Activated T-helper 1 cell treated with anti-CD3 and anti-CD28 coated beads, Interleukin-12 subunit alpha, Interleukin-12 subunit beta, Interleukin-2, Interleukin-4 antibody, amounts not matched to agents 30 ng/mL and 10 ng/mL and 1 ng/mL, durations not matched to agents 14 hours and 24 hours and 36 hours (primary cell): ENCODE measurements at regions of chr12 and their contacts with region 1.

Region 1: GRCh38 chr12:9869307-9870161 is at the start of gene CLEC2B:
- DNase-seq: peak; percentile 17
- H3K4me3 Mint-ChIP-seq: peak within 1 kb of the TSS; percentile 93
- H3K27ac Mint-ChIP-seq: peak within 1 kb of the TSS; percentile 97
- H3K4me1 Mint-ChIP-seq: peaks cover 45% of the 10 kb centered on the region
- H3K27me3 Mint-ChIP-seq: no peaks in the 10 kb centered on the region
- total RNA-seq, gene CLEC2B: 13.1 and 14.3 TPM in 2 replicates

Region 2: GRCh38 chr12:8712572-8712971 is 1157.0 kb before region 1 on chr12:
- intact Hi-C with region 1: no loop called
- DNase-seq: no peak
- H3K4me3 Mint-ChIP-seq: no peak overlapping the region
- H3K27ac Mint-ChIP-seq: no peak overlapping the region
- H3K4me1 Mint-ChIP-seq: no peaks in the 10 kb centered on the region
- H3K27me3 Mint-ChIP-seq: peaks cover 8% of the 10 kb centered on the region

Region 3: GRCh38 chr12:9364224-9365176 is 505.0 kb before region 1 on chr12:
- intact Hi-C with region 1: loop called (anchors 2 kb)
- DNase-seq: peak; percentile 47
- H3K4me3 Mint-ChIP-seq: peak overlapping the region; percentile 52
- H3K27ac Mint-ChIP-seq: peak overlapping the region; percentile 69
- H3K4me1 Mint-ChIP-seq: peaks cover 55% of the 10 kb centered on the region
- H3K27me3 Mint-ChIP-seq: peaks cover 27% of the 10 kb centered on the region

Region 4: GRCh38 chr12:9741726-9742125 is 127.8 kb before region 1 on chr12:
- intact Hi-C with region 1: loop called (anchors 1 kb)
- DNase-seq: peak; percentile 81
- H3K4me3 Mint-ChIP-seq: peak overlapping the region; percentile 70
- H3K27ac Mint-ChIP-seq: peak overlapping the region; percentile 86
- H3K4me1 Mint-ChIP-seq: peaks cover 72% of the 10 kb centered on the region
- H3K27me3 Mint-ChIP-seq: no peaks in the 10 kb centered on the region

Region 5: DNA sequence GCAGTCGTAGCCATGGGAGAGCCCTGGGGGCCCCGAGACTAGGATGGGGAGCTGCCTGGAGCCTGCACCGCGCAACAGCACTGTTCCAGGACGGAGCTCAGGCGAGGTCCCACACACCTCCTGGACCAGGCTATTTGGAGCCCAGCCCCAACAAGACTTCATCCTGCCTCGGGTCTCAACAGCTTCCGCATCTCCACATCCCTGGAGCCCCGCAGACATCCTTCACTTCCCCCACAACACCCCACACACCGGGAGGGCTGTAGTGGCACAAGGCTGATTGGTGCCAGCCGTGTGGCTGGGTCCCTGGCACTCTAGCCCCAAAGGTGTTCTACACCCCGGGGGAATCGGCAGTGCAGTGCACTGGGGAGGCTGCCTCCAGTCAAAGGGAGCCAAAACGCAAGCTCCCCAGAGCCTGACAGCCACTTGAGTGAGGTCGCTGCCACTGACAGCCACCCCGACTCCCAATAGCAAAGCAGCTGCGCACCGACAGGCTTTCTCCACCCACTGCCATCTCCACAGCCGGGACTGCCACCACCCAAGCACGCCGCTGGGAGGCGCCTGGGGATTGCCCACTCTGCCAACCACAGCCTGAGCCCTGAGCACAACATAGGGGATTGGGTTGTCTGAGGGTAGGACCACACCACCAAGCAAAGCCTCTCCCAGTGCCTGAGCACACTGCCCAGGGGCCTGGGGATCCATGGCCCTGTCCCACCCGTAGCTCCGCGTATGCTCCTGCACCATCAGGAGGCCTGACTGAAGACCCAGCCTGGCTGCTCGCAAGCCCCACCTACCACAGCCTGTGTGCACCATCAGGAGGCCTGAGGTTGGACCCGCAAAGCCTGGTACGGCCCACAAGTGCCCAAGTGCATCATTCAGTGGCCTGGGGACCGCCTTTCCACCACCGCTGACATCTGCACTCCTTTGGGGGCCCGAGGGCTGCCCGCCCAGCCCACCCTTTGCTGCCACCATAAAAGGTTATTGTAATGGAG is 55.4 kb before region 1 on chr12:
- intact Hi-C with region 1: loop called (anchors 1 kb)
- DNase-seq: peak; percentile 90
- H3K4me3 Mint-ChIP-seq: peak overlapping the region; percentile 87
- H3K27ac Mint-ChIP-seq: peak overlapping the region; percentile 61
- H3K4me1 Mint-ChIP-seq: peaks cover 35% of the 10 kb centered on the region
- H3K27me3 Mint-ChIP-seq: peaks cover 21% of the 10 kb centered on the region

Region 6: GRCh38 chr12:9948606-9949296 is 79.2 kb after region 1 on chr12:
- intact Hi-C with region 1: loop called (anchors 1 kb)
- DNase-seq: no peak
- H3K4me3 Mint-ChIP-seq: no peak overlapping the region
- H3K27ac Mint-ChIP-seq: peak overlapping the region; percentile 18
- H3K4me1 Mint-ChIP-seq: peaks cover 54% of the 10 kb centered on the region
- H3K27me3 Mint-ChIP-seq: peaks cover 4% of the 10 kb centered on the region

Region 7: DNA sequence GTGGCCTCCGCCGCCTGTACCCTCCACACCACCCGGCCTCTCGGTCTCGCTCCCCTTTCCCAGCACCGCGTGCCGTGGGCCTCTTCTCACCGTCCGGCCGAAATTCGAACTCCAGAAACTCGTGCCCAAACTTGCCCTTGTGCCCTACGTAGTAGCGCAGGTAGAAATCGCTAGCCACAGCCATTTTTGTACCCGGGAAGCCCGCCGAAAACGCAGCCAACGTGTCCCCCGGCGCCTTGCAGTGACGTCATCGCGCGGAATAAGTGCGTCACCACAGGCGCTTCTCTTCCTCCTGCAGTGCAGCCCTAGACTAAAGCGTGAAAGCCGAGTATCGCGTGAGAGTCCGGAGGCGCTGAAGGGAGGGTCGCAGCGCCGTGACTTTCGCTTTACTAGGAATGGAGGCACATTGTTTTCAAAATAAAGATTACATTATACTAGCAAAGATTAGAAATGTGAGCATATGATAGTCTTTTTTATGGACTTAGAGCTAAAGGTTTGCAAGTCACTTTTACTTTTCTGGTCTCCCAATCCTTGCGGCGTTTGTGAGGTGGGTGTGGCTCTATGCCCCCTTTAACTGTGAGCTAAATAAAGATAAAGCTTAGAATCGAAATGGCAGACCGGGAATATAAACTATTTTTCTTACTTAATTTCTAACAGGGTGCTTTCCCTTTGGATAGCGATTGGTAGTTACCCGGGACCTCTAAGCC is 744.0 kb after region 1 on chr12 and contains the start of gene MAGOHB:
- intact Hi-C with region 1: loop called (anchors 2 kb)
- DNase-seq: peak; percentile 97
- H3K4me3 Mint-ChIP-seq: peak within 1 kb of the TSS; percentile 97
- H3K27ac Mint-ChIP-seq: peak within 1 kb of the TSS; percentile 99
- H3K4me1 Mint-ChIP-seq: peaks cover 36% of the 10 kb centered on the region
- H3K27me3 Mint-ChIP-seq: peaks cover 16% of the 10 kb centered on the region
- total RNA-seq, gene MAGOHB: 79.4 and 85.1 TPM in 2 replicates